ENCODE measurements at regions of chr16 and their contacts with region 1.

Region 1: DNA sequence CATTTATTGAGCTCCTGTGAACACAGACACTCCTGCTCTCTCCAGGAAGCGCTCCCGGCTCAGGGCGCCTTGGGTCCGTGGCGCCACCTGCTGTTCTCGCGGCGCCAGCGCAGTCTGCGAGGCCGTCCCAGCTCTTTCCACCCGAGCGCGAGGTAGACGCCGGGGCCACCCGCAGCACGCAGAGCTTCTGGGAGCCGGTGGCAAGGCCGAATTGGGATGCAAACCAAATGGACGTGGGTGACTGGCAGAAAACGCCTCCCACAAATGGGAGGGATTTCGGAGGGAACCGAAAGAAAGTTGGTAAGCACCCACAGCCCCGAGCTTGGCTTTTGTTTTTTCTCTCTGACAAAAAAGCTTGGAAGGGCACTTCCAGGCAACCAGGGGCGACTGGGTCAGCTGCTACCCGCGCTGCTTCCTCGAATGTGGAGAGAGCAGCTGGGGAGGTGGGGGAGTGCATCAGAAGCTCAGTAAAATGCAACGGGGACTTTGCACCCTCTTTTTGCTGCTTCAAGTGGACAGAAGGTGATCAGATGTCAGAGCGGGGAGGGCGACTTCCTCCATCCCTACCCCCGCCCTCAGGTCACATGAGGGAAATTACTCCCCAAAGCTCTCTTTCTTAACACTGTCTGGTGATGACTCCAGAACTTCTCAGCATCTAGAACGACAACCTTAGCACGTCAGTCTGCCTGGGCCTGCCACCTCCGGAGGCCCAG is 13.5 kb upstream of the N4BP1 start:
- ATAC-seq: peak; percentile 93 to 100 (median 99)
- H3K4me3 ChIP-seq: peak overlapping the region in 2 of 5 donors; percentile 4 to 18
- H3K27ac ChIP-seq: no peak overlapping the region
- H3K4me1 ChIP-seq: no peaks in the 10 kb centered on the region

Region 2: GRCh38 chr16:48244080-48244862 is 379.2 kb before region 1 on chr16 and contains the start of gene LONP2:
- in situ Hi-C with region 1: loop called in 3 of 9 experiments (anchors 25 kb)
- ATAC-seq: peak; percentile 95 to 98 (median 98)
- H3K4me3 ChIP-seq: peak within 1 kb of the TSS; percentile 51 to 96 (median 57)
- H3K27ac ChIP-seq: peak within 1 kb of the TSS; percentile 62 to 91
- H3K4me1 ChIP-seq: peaks cover 12 to 13% of the 10 kb centered on the region in 2 donors
- total RNA-seq, gene LONP2: 25.3 to 70.5 (median 42.5) TPM

Region 3: DNA sequence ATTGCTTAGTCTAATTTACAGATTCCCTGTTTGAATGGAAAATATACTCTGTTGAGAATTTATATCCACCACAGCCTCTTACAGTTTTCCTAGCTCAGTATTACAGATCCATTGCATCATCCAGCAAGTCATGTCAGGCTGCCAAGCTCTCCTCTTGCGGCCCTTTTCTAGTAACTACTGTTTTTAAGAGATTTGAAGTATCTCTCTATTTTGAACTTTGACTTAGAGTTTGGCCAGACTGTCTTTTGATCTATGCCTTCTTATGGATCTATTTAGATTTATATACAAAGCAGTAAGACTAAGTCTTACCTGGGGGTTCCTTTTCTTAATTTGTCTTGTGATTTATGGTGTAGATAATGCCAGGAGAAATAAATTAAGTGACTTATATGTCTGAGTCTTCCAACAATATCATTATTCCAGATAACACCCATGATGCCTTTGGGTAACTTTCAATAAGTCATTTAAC is 323.0 kb before region 1 on chr16:
- in situ Hi-C with region 1: no loop called
- ATAC-seq: peak in 5 of 8 experiments; percentile 75 to 99 (median 95)
- H3K4me3 ChIP-seq: no peak overlapping the region
- H3K27ac ChIP-seq: peak overlapping the region; percentile 54 to 81
- H3K4me1 ChIP-seq: peaks cover 14 to 21% of the 10 kb centered on the region in 2 donors

Region 4: DNA sequence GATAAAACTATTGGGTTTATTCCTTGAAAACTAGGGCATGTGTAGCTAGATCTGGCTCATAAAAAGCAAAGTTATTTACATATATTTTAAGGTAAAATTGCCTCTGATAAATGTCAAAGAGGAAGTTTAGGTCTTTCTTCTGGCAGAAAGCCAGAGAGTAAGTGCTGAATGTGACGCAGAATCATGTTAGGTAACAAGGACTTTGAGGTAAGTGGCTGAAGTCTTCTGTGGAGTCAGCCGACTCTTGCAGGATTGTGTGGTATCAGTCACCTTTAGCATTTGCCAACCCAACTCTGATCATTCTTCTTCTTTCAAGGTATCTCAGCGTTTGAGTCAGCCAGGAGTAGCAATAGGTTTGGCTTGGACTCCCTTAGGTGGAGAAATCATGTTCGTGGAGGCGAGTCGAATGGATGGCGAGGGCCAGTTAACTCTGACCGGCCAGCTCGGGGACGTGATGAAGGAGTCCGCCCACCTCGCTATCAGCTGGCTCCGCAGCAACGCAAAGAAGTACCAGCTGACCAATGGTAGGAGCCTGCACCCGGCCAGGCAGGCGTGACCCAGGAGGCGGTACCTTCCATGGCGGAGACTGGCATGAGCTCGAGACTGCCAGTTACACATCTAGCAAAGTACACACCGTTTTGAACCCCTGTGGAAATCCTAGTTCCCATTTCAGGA is 276.1 kb before region 1 on chr16:
- in situ Hi-C with region 1: loop called in 3 of 9 experiments (anchors 10 to 25 kb)
- ATAC-seq: peak in 3 of 8 experiments; percentile 7 to 18 (median 7)
- H3K4me3 ChIP-seq: no peak overlapping the region
- H3K27ac ChIP-seq: no peak overlapping the region
- H3K4me1 ChIP-seq: peaks cover 0 to 7% of the 10 kb centered on the region in 2 donors

Region 5: DNA sequence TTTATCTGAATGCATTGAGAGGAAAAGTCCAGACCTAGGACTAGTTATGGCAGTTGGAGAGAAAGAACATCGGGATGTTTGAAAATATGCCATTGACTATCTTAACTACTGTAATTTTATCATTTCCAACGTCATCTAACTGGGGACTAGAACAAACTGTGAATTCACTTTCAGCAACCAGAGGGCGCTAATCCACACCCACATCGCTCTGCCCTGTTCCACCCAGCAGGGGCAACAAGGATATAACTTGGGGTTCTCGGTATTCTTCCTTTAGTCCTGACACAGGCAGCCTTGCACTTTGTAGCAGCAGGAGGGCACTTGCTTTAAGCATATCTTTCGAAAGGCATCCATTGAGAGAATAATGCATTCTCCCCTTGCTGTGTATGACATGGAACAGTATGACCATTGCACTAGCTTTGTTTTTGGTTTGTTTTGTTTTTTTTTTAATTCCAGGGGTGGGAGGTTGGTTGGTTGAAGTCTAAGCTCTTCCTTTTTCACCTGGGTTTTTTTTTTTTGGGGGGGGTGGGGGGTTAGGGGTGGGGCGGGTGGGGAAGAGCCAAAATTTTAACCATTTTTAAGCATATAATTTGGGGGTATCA is 269.8 kb before region 1 on chr16:
- in situ Hi-C with region 1: loop called in 3 of 9 experiments (anchors 10 to 25 kb)
- ATAC-seq: peak; percentile 65 to 95 (median 84)
- H3K4me3 ChIP-seq: no peak overlapping the region
- H3K27ac ChIP-seq: no peak overlapping the region
- H3K4me1 ChIP-seq: no peaks in the 10 kb centered on the region

Region 6: DNA sequence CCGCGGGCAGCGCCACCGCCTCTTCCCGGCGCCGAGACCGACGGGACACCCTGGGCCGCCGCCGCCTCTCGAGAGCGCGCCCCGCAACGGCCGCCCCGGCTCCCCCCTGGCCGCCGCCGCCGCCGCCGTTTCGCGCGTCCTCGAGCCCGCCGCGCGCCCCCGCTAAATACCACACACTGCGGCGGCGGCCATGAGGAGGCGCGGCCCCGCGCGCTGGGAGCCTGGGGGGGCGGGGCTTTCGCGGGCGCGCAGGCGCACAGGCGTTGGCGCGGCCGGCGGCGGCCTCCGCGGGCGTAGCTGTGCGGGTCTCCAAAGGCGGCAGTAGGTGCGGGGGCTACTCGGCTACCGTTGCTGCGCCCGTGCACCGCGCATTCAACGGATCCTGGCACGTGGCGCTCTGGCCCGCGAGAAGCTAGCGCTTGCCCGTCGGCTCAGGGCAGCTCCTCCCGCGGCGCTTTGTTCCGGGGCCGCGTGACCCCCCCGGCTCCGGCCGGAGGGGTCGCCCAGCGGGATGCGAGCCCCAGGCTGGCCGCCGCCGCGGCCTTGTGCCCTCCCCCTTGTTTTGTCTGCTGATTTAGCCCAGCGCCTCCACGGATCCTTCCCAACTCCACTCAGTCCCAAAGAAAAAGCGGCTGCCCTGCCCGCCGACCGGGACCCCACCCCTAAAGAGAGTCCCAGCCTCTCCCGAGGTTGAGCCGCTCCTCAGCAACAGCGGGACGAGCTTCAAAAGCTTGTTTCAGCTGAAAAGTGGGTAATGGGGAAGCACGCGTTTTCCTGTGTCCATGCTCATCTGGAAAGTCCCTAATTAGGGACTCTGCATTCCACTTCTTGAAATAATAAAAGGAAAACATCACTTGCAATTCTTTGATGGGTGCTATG is 237.9 kb before region 1 on chr16 and contains the start of gene SIAH1:
- in situ Hi-C with region 1: loop called in 2 of 9 experiments (anchors 25 kb)
- ATAC-seq: peak; percentile 72 to 86 (median 79)
- H3K4me3 ChIP-seq: peak within 1 kb of the TSS; percentile 61 to 90 (median 73)
- H3K27ac ChIP-seq: peak within 1 kb of the TSS; percentile 98 to 99
- H3K4me1 ChIP-seq: peaks cover 0 to 12% of the 10 kb centered on the region in 2 donors
- total RNA-seq, gene SIAH1: 9.0 to 46.2 (median 37.9) TPM

Region 7: DNA sequence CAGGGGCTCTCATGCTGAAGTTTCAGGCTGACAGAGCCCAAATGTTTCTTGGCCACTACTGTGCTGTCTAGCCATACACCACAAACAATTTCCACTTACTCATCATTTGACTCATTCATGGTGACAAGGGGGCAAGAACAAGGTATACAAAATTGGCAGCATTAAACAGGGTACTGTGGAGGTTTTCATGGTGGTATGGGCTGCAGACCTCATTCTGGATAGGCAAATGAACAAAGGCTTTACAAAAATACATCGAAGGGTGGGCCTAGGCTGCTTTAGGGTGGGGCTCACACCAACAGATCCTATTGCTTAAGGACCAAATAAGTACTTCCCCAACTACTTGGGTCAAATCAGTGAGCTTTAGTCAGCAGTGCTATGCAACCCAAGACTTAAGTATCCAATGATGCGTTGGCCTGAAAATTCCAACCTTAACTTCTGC is 66.5 kb before region 1 on chr16:
- in situ Hi-C with region 1: no loop called
- ATAC-seq: no peak
- H3K4me3 ChIP-seq: no peak overlapping the region
- H3K27ac ChIP-seq: no peak overlapping the region
- H3K4me1 ChIP-seq: peaks cover 8 to 14% of the 10 kb centered on the region in 2 donors

Measured in motor neuron (in vitro differentiated cells).